Activated CD4-positive, alpha-beta T cell treated with anti-CD3 and anti-CD28 coated beads, Interleukin-2, amount 10 ng/mL, durations not matched to agents 24 days and 14 days (primary cell): ENCODE measurements at regions of chr11 and their contacts with region 1.

Region 1: GRCh38 chr11:36376888-36377758 is 81.0 kb downstream of the PRR5L start:
- DNase-seq: peak; percentile 89
- H3K4me3 Mint-ChIP-seq: peak overlapping the region; percentile 98
- H3K27ac Mint-ChIP-seq: peak overlapping the region; percentile 93
- H3K4me1 Mint-ChIP-seq: peaks cover 39% of the 10 kb centered on the region
- H3K27me3 Mint-ChIP-seq: peaks cover 42% of the 10 kb centered on the region

Region 2: DNA sequence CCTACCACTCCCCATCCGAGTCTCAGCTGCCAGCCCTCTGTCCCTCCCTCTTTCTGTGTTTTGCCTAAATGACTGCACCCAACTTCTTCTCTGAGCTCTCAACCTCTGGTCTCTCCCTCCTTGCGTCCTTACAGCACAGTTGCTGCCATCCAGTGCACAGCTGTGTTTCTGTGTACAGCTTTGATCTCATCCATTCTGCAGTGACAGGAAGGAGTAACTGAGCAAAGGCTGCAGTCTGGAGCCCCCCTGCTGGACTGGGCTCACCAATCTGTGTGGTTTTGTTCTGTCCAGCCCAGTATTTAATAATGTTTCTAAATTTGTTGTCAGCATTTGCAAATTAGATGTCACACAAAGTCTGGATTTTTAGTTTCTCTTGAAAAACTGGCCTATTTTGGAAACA is 37.2 kb before region 1 on chr11:
- intact Hi-C with region 1: loop called (anchors 5 kb)
- DNase-seq: no peak
- H3K4me3 Mint-ChIP-seq: no peak overlapping the region
- H3K27ac Mint-ChIP-seq: no peak overlapping the region
- H3K4me1 Mint-ChIP-seq: peaks cover 16% of the 10 kb centered on the region
- H3K27me3 Mint-ChIP-seq: peaks cover 34% of the 10 kb centered on the region

Region 3: GRCh38 chr11:36390963-36391471 is 13.9 kb after region 1 on chr11:
- intact Hi-C with region 1: loop called (anchors 2 kb)
- DNase-seq: no peak
- H3K4me3 Mint-ChIP-seq: peak overlapping the region; percentile 47
- H3K27ac Mint-ChIP-seq: peak overlapping the region; percentile 80
- H3K4me1 Mint-ChIP-seq: peaks cover 64% of the 10 kb centered on the region
- H3K27me3 Mint-ChIP-seq: no peaks in the 10 kb centered on the region

Region 4: DNA sequence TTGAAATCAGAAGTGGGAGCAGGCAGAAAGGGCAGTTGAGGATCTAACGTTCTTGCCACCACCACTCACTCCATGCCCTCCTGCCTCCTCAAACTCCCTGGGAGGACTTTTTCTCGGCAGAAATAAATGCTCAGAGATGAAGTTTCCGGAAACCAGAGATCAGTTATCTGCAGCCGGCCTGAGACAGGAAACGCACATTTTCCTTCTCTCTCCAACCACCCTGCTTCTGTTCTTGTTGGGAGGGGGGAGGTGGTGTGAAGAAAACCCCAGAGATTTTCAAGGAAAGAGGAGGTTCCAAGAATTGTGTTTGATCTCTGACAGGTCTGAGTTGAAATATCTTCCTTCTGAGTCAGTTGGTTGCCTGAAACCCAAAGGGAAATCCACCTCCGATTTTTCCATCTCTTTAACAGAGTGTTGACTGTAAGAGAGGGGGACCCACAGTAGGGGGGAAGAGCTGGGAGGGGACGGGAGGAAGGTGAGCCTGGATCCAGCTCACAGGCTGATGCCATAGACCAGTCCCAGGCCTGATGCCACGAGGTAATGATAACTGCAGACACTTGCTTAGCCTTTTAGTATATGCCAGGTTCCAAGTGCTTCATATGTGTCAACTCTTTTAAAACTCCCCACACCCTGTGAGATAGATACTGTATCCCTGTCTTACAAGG is 32.2 kb after region 1 on chr11:
- intact Hi-C with region 1: loop called (anchors 1 kb)
- DNase-seq: peak; percentile 82
- H3K4me3 Mint-ChIP-seq: peak overlapping the region; percentile 75
- H3K27ac Mint-ChIP-seq: peak overlapping the region; percentile 96
- H3K4me1 Mint-ChIP-seq: peaks cover 67% of the 10 kb centered on the region
- H3K27me3 Mint-ChIP-seq: no peaks in the 10 kb centered on the region

Region 5: GRCh38 chr11:36421546-36422155 is 44.5 kb after region 1 on chr11:
- intact Hi-C with region 1: loop called (anchors 1 kb)
- DNase-seq: no peak
- H3K4me3 Mint-ChIP-seq: peak overlapping the region; percentile 75
- H3K27ac Mint-ChIP-seq: peak overlapping the region; percentile 91
- H3K4me1 Mint-ChIP-seq: peaks cover 63% of the 10 kb centered on the region
- H3K27me3 Mint-ChIP-seq: no peaks in the 10 kb centered on the region

Region 6: GRCh38 chr11:36478700-36479329 is 101.7 kb after region 1 on chr11:
- intact Hi-C with region 1: loop called (anchors 5 kb)
- DNase-seq: peak; percentile 82
- H3K4me3 Mint-ChIP-seq: no peak overlapping the region
- H3K27ac Mint-ChIP-seq: no peak overlapping the region
- H3K4me1 Mint-ChIP-seq: peaks cover 10% of the 10 kb centered on the region
- H3K27me3 Mint-ChIP-seq: no peaks in the 10 kb centered on the region